Naive thymus-derived CD4-positive, alpha-beta T cell (primary cell): ENCODE measurements at regions of chr17 and their contacts with region 1.

Region 1: DNA sequence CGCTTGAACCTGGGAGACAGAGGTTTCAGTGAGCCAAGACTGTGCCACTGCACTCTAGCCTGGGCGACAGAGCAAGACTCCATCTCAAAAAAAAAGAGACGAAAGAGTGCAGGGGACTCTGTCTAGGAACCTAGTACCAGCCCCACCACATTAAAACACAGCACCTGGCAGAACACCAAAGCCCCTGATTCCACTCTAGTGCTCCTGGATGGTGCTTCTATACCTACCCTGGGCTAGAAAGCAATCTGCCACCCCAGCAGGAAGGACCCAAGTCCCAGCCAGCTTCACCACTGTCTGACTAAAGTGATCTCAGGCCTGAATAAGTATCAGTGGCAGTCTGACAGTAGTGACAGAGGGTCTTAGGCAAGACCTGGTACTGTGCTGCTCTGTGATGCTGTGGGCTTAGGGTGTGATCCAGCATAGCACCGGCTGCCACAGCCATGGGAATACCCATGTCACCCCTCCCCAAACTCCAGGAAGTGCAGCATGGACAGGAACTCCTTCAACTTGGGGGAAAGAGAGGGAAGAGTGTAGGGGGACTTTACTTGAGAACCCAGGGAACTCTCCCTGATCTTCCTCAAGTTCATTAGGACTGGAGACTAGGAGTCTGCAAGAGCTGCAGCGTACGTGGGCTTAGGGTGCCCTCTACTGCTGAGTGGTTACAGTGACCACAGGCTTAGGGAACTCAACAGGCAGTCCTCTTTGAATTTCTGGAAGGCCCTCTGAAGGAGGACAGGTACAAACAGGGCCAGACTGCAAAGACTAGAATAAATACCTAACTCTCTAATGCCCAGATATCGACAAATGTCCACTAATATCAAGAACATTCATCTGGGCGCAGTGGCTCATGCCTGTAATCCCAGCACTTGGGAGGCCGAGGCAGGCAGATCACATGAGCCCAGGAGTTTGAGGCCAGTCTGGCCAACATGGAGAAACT is 30.0 kb upstream of the RNF43 start:
- DNase-seq: peak; percentile 11 to 70 (median 36)
- ATAC-seq: peak; percentile 79
- H3K4me3 ChIP-seq: no peak overlapping the region
- H3K4me3 Mint-ChIP-seq: no peak overlapping the region
- H3K27ac ChIP-seq: no peak overlapping the region
- H3K27ac Mint-ChIP-seq: no peak overlapping the region
- H3K4me1 ChIP-seq: no peaks in the 10 kb centered on the region
- H3K4me1 Mint-ChIP-seq: peaks cover 0 to 11% (median 4%) of the 10 kb centered on the region in 7 donors
- H3K27me3 ChIP-seq: no peaks in the 10 kb centered on the region
- H3K27me3 Mint-ChIP-seq: peaks cover 0 to 4% (median 0%) of the 10 kb centered on the region in 5 donors

Region 2: DNA sequence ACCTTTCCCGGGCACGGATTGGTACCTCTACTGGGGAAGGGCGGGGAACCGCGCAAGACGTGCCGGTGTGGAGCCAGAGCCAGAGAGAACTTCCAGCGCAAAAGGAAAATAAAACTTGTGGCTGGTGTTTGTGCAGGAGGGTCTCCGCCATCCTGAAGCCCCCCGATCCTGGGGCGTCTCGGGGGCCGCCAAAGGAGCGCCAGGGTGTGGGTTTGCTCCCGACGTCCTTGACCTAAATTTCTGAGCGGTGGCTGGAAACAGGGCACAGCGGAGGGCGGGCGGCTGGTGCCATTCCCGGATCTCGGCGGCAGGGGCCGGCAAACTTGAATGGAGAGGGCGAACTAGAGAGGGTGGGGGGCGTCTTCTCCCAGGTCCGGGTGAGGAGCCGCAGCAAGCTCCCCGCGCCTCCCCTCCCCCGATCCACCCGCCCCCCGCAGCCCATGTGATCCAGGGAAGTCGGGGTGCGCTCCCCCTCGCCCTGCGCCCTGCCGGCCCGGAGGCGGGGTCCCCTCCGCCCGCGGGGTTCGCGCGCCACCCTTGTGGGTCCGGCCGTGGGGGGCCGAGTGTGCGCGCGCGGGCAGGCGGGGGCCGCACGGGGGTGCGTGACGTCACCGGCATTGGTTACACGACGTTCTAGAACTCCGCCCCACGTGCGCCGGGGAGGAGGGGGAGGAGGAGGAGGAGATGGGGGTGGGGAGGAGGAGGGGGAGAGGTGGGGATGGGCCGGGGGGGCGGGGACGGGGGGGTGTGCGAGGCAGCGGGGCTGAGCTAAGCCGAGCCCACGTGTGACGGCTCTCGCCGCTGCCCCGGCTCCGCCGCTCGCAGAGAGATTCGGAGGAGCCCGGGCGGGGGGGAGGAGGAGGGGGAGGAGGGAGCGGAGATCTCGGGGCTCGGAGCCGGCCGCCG is 1191.3 kb before region 1 on chr17 and contains the start of gene MSI2:
- CTCF ChIA-PET with region 1: no interaction called
- POLR2A ChIA-PET with region 1: no interaction called
- intact Hi-C with region 1: no loop called
- DNase-seq: peak; percentile 80 to 93 (median 85)
- ATAC-seq: peak; percentile 89
- H3K4me3 ChIP-seq: peak within 1 kb of the TSS; percentile 87
- H3K4me3 Mint-ChIP-seq: peak within 1 kb of the TSS; percentile 90 to 100 (median 96)
- H3K27ac ChIP-seq: peak within 1 kb of the TSS; percentile 83
- H3K27ac Mint-ChIP-seq: peak within 1 kb of the TSS; percentile 85 to 98 (median 91)
- H3K4me1 ChIP-seq: peaks cover 13 to 28% of the 10 kb centered on the region in 2 donors
- H3K4me1 Mint-ChIP-seq: peaks cover 21 to 57% (median 46%) of the 10 kb centered on the region in 7 donors
- H3K27me3 ChIP-seq: no peaks in the 10 kb centered on the region
- H3K27me3 Mint-ChIP-seq: peaks cover 0 to 4% (median 0%) of the 10 kb centered on the region in 5 donors
- total RNA-seq, gene MSI2: 111 to 169 (median 150) TPM

Region 3: GRCh38 chr17:58210922-58211321 is 236.4 kb before region 1 on chr17:
- CTCF ChIA-PET with region 1: no interaction called
- POLR2A ChIA-PET with region 1: no interaction called
- intact Hi-C with region 1: no loop called
- DNase-seq: no peak
- ATAC-seq: no peak
- H3K4me3 ChIP-seq: no peak overlapping the region
- H3K4me3 Mint-ChIP-seq: no peak overlapping the region
- H3K27ac ChIP-seq: no peak overlapping the region
- H3K27ac Mint-ChIP-seq: no peak overlapping the region
- H3K4me1 ChIP-seq: no peaks in the 10 kb centered on the region
- H3K4me1 Mint-ChIP-seq: no peaks in the 10 kb centered on the region
- H3K27me3 ChIP-seq: no peaks in the 10 kb centered on the region
- H3K27me3 Mint-ChIP-seq: no peaks in the 10 kb centered on the region

Region 4: DNA sequence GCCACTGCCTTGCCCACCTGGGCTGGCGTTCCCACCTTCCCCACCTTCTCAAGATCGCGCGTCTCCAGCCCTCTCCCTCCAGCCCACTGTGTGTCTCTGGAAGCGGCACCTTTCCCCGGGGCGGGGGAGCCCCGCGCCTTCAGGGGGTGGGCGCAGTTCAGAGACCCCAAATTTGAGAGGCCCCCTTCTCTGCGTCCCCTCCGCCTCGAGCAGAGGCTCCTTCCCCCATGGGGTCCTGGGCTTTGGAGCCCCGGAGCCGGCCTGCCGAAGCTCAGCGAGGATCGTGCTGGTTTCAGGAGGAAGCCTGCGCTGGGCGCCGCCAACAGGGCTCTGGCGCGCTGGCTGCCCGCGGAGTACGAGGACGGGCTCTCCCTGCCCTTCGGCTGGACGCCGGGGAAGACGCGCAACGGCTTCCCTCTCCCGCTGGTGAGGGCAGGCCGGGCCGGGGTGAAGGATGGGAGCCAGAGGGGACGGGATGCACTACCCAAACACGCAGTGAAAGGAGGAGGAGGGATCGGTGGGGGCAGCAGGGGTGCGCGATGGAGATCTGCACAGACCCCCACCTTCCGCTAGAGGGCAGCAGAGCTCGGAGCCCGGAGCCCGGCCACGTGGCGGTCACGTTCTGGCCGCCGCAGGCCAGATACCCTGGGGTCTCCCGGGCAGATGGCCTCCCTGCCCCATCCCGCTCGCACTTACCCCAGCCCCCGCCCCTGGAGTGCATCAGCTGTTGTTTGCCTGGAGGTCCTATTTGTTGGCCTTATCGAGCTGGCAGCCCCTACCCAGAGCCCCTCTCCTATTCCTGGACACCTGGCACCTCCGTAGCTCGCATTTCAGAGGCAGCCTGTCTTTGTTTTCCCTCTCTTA is 197.8 kb before region 1 on chr17:
- CTCF ChIA-PET with region 1: interaction called, 3 read pairs
- POLR2A ChIA-PET with region 1: no interaction called
- intact Hi-C with region 1: loop called (anchors 1 kb)
- DNase-seq: peak; percentile 47 to 83 (median 74)
- ATAC-seq: peak; percentile 98
- H3K4me3 ChIP-seq: peak overlapping the region; percentile 65
- H3K4me3 Mint-ChIP-seq: peak overlapping the region; percentile 58 to 87 (median 81)
- H3K27ac ChIP-seq: no peak overlapping the region
- H3K27ac Mint-ChIP-seq: no peak overlapping the region
- H3K4me1 ChIP-seq: no peaks in the 10 kb centered on the region
- H3K4me1 Mint-ChIP-seq: peaks cover 0 to 21% (median 10%) of the 10 kb centered on the region in 7 donors
- H3K27me3 ChIP-seq: no peaks in the 10 kb centered on the region
- H3K27me3 Mint-ChIP-seq: peaks cover 3 to 50% (median 14%) of the 10 kb centered on the region in 5 donors

Region 5: DNA sequence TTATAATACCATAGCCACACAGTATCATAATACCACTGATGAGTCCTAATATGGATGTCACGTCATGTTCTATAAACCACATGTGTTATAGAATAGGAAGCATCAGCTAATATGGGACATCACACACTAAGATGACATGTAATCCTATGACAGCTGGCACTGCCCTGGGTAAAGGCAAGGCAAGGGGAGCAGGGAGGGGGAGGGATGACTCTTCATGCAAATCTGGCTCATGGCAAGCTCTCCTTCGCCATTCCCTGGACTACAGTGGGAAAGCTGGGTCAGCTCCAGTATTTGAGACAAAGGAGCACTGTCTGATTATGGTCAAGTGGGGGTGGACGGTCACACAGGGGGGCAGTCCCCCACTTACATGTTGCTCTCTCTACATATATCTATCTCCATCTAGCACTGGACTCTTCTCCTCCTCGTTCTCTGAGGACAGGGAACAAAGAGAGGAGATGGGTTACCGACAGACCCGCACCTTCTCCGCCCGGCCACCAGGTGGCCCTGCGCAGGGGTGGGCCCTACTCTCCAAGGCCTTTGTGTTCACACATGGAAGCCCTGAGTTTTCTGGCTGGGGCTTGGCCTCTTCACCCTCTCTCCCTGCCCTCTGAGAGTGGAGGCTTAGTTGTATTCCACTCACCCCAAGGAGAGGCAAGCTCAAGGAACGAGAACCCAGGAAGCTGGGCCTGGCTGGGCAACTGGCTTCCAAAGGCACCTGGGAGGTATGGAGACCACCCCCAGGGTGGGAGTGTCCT is 143.2 kb before region 1 on chr17:
- CTCF ChIA-PET with region 1: no interaction called
- POLR2A ChIA-PET with region 1: no interaction called
- intact Hi-C with region 1: loop called (anchors 1 kb)
- DNase-seq: peak in 8 of 9 donors; percentile 32 to 63 (median 53)
- ATAC-seq: peak; percentile 89
- H3K4me3 ChIP-seq: no peak overlapping the region
- H3K4me3 Mint-ChIP-seq: peak overlapping the region in 1 of 10 donors; percentile 38
- H3K27ac ChIP-seq: no peak overlapping the region
- H3K27ac Mint-ChIP-seq: peak overlapping the region in 1 of 9 donors; percentile 46
- H3K4me1 ChIP-seq: peaks cover 0 to 6% of the 10 kb centered on the region in 2 donors
- H3K4me1 Mint-ChIP-seq: peaks cover 0 to 7% (median 4%) of the 10 kb centered on the region in 7 donors
- H3K27me3 ChIP-seq: no peaks in the 10 kb centered on the region
- H3K27me3 Mint-ChIP-seq: peaks cover 0 to 5% (median 0%) of the 10 kb centered on the region in 5 donors

Region 6: DNA sequence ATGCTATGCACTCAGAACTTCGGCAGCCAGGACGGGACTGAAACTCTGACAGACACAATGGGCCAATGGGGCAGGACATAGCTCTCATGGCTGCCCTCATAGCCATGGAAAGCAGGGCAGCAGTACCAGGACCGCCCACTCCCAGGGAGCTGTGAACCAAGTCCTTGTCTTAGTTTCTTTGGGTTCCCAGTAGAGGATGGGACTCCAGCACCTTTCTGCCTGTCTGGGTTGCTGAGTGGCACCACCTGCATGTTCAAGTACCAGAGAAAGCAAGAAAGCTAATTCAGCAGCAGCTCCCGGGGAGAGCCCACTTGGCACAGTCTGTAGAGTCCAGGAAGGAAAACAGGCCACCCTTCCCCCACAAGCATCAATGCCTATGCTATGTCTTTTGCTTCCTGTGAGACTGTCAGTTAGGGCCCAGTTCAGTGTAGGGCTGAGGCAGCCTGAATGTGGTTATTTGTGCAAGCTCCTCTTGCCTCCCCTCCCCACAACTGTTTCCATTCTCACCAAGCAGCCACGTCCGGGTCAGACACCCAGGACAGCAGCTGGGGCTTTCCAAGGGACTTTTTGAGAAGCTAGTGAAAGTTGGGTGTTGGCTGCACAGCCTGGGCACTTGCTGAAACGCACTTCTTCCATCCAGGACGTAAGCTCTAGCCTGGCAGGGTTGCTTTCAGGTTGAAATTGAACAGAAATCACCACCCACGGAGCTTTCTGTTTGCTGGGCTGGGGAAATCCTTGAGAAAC is 103.1 kb before region 1 on chr17:
- CTCF ChIA-PET with region 1: no interaction called
- POLR2A ChIA-PET with region 1: interaction called, 3 read pairs
- intact Hi-C with region 1: loop called in 1 of 2 experiments (anchors 1 kb)
- DNase-seq: peak; percentile 48 to 96 (median 80)
- ATAC-seq: peak; percentile 91
- H3K4me3 ChIP-seq: peak overlapping the region; percentile 64
- H3K4me3 Mint-ChIP-seq: peak overlapping the region; percentile 80 to 100 (median 88)
- H3K27ac ChIP-seq: peak overlapping the region; percentile 98
- H3K27ac Mint-ChIP-seq: peak overlapping the region; percentile 91 to 100 (median 95)
- H3K4me1 ChIP-seq: peaks cover 72 to 78% of the 10 kb centered on the region in 2 donors
- H3K4me1 Mint-ChIP-seq: peaks cover 54 to 100% (median 87%) of the 10 kb centered on the region in 7 donors
- H3K27me3 ChIP-seq: no peaks in the 10 kb centered on the region
- H3K27me3 Mint-ChIP-seq: no peaks in the 10 kb centered on the region

Region 7: DNA sequence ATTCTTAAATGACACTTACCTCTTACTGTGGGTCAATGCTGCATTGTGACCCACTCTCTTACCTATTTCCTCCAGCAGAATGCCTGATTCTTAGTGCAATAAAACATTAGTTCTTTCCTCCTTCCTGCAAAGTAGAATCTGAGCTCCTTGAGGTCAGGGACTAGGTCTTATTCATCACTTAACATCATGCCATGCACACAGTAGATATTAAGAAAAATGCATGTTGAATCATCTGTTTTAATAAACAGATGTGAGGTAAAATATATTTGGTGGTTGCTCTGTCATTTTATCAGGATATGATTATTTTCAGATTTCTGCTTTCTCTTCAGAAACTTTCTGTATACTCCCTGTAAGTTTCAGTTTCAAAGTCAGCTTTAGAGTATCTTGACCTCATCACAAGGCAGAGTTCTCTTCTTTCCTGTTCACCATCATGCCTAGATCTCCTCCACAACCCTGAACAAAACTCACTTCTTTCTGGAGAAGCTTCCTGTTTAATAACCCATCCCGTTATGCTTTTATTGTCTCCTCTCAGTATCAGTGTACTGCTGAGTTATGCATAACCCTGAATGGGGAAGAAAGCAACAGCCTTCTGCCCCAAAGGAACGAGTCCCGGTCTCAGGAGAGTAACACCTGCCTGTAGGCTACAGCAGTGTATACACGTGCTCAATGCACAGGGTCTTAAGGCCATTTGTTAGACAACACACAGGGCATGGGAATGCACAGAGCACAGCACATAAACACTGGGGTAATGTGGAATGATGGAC is 65.0 kb before region 1 on chr17:
- CTCF ChIA-PET with region 1: no interaction called
- POLR2A ChIA-PET with region 1: no interaction called
- intact Hi-C with region 1: loop called (anchors 1 to 10 kb)
- DNase-seq: peak in 1 of 9 donors; percentile 19
- ATAC-seq: peak; percentile 59
- H3K4me3 ChIP-seq: no peak overlapping the region
- H3K4me3 Mint-ChIP-seq: peak overlapping the region; percentile 3 to 77 (median 38)
- H3K27ac ChIP-seq: peak overlapping the region; percentile 42
- H3K27ac Mint-ChIP-seq: peak overlapping the region; percentile 28 to 84 (median 78)
- H3K4me1 ChIP-seq: peaks cover 16 to 36% of the 10 kb centered on the region in 2 donors
- H3K4me1 Mint-ChIP-seq: peaks cover 34 to 66% (median 57%) of the 10 kb centered on the region in 7 donors
- H3K27me3 ChIP-seq: no peaks in the 10 kb centered on the region
- H3K27me3 Mint-ChIP-seq: no peaks in the 10 kb centered on the region